ENCODE measurements at regions of chr1 and their contacts with region 1.

Region 1: GRCh38 chr1:23184212-23184934 is 15.7 kb upstream of the LUZP1 start:
- DNase-seq: peak; percentile 22
- H3K4me3 Mint-ChIP-seq: no peak overlapping the region
- H3K27ac Mint-ChIP-seq: no peak overlapping the region
- H3K4me1 Mint-ChIP-seq: peaks cover 8% of the 10 kb centered on the region
- H3K27me3 Mint-ChIP-seq: peaks cover 14% of the 10 kb centered on the region

Region 2: GRCh38 chr1:23081376-23081775 is 103.0 kb before region 1 on chr1:
- CTCF ChIA-PET with region 1: interaction called, 15 read pairs
- POLR2A ChIA-PET with region 1: interaction called, 3 read pairs
- DNase-seq: no peak
- H3K4me3 Mint-ChIP-seq: no peak overlapping the region
- H3K27ac Mint-ChIP-seq: no peak overlapping the region
- H3K4me1 Mint-ChIP-seq: no peaks in the 10 kb centered on the region
- H3K27me3 Mint-ChIP-seq: no peaks in the 10 kb centered on the region

Region 3: DNA sequence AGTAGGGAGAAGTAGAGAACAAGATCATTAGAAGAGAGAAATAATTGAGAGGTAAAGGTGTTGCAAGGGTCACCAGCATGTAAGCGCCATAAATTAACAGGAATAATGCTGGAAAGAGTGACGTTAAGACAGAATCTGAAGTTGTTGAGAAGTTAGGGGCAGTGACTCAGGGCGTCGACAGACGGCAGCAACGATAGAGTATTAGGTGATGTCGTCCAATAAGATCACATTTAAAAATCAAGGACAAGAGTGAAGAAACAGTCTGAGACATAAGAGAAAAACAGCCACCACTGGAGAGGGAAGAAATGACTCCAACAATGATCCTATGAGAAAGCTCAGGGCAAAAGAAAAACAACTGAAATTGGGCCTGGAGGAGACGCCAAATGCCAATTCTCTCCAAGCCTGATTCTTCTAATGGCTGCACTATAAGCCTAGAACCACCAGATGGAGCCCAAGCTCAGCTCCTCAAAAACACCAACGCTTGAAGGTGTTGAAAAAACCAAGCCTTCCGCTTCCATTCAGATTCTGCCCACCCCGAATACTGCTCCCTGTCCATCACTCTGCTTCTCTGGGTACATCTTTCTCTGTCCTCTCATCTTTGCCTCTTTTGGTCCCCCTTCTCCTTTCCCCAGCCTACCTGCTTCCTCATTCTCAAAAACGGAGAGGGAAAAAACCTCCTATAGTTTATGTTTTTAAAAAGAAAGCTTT is 85.8 kb before region 1 on chr1:
- CTCF ChIA-PET with region 1: interaction called, 393 read pairs
- POLR2A ChIA-PET with region 1: interaction called, 39 read pairs
- DNase-seq: peak; percentile 66
- H3K4me3 Mint-ChIP-seq: no peak overlapping the region
- H3K27ac Mint-ChIP-seq: no peak overlapping the region
- H3K4me1 Mint-ChIP-seq: peaks cover 50% of the 10 kb centered on the region
- H3K27me3 Mint-ChIP-seq: no peaks in the 10 kb centered on the region

Region 4: DNA sequence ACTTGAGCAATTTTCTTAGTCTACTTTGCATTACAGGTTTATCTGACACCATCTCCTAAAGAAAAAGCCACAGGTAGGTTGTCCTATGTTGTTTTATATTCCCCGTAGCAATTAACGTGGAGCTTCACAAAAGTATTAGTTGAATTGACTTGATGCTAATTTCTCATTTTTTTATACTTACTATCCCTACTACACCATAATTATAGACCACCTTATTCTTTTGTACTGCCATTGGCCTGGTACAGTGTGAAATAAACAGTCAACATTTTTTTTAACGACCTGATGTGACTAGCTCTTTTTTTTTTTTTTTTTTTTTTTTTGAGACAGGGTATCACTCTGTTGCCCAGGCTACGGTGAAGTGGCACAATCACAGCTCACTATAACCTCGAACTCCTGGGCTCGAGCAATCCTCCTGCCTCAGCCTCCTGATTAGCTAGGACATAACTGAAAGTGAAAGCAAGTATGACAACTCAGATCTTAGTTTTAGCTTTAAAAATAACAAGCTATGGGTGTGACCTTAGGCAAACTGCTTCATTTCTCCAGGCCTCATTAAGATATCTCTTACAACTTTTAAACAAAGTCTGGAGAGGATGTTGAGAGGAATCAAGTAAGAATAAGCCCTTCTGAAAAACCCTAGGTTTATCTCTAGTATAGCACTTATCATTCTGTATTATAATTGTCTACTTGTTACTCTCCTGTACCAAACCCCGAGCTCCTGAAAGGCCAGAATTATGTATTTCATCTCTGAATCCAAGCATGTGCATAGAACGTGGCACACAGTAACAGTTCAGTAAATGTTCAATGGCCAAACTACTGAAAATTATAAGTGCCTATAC is 65.2 kb before region 1 on chr1:
- CTCF ChIA-PET with region 1: interaction called, 21 read pairs
- POLR2A ChIA-PET with region 1: no interaction called
- DNase-seq: peak; percentile 68
- H3K4me3 Mint-ChIP-seq: peak overlapping the region; percentile 63
- H3K27ac Mint-ChIP-seq: peak overlapping the region; percentile 89
- H3K4me1 Mint-ChIP-seq: peaks cover 57% of the 10 kb centered on the region
- H3K27me3 Mint-ChIP-seq: no peaks in the 10 kb centered on the region

Region 5: GRCh38 chr1:23163395-23163794 is 21.0 kb before region 1 on chr1:
- CTCF ChIA-PET with region 1: interaction called, 25 read pairs
- POLR2A ChIA-PET with region 1: interaction called, 3 read pairs
- DNase-seq: no peak
- H3K4me3 Mint-ChIP-seq: no peak overlapping the region
- H3K27ac Mint-ChIP-seq: no peak overlapping the region
- H3K4me1 Mint-ChIP-seq: peaks cover 16% of the 10 kb centered on the region
- H3K27me3 Mint-ChIP-seq: no peaks in the 10 kb centered on the region

Region 6: GRCh38 chr1:23196639-23197328 is 12.4 kb after region 1 on chr1:
- CTCF ChIA-PET with region 1: interaction called, 23 read pairs
- POLR2A ChIA-PET with region 1: no interaction called
- DNase-seq: no peak
- H3K4me3 Mint-ChIP-seq: no peak overlapping the region
- H3K27ac Mint-ChIP-seq: no peak overlapping the region
- H3K4me1 Mint-ChIP-seq: no peaks in the 10 kb centered on the region
- H3K27me3 Mint-ChIP-seq: peaks cover 7% of the 10 kb centered on the region

Region 7: DNA sequence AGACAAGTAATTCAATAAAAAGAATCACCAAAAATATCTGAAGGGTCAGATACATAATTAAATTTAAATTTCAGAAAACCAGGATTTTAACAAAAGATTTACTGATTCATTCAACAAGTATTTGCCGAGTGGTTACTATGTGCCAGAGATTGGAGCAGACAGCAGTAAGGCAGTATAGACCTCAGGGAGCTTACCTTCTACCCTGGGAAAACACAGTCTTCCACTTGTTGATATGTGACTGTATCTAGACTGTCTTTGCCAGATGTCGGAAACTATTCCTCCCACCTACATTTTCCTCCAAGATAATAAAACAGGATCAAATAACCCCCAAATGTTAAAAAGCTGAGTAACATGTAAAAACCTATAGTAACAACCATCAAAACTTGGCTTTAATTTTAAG is 153.5 kb after region 1 on chr1:
- CTCF ChIA-PET with region 1: no interaction called
- POLR2A ChIA-PET with region 1: no interaction called
- DNase-seq: no peak
- H3K4me3 Mint-ChIP-seq: no peak overlapping the region
- H3K27ac Mint-ChIP-seq: peak overlapping the region; percentile 0
- H3K4me1 Mint-ChIP-seq: peaks cover 56% of the 10 kb centered on the region
- H3K27me3 Mint-ChIP-seq: no peaks in the 10 kb centered on the region

Measured in activated CD4-positive, alpha-beta memory T cell treated with anti-CD3 and anti-CD28 coated beads, Interleukin-2, amount 10 ng/mL, durations not matched to agents 7 days and 5 days (primary cell).